Aorta (tissue), 5 donors: ENCODE measurements at regions of chr12 and their contacts with region 1.

Region 1: GRCh38 chr12:128823916-128824839 is at the start of gene SLC15A4:
- DNase-seq: peak; percentile 99
- ATAC-seq: peak; percentile 99
- H3K4me3 ChIP-seq: peak within 1 kb of the TSS; percentile 66 to 73
- H3K27ac ChIP-seq: peak within 1 kb of the TSS; percentile 44 to 81
- H3K4me1 ChIP-seq: no peaks in the 10 kb centered on the region
- H3K27me3 ChIP-seq: no peaks in the 10 kb centered on the region
- total RNA-seq, gene SLC15A4: 36.2 to 38.6 TPM

Region 2: GRCh38 chr12:128724468-128725046 is 99.6 kb before region 1 on chr12:
- intact Hi-C with region 1: no loop called
- DNase-seq: no peak
- ATAC-seq: no peak
- H3K4me3 ChIP-seq: no peak overlapping the region
- H3K27ac ChIP-seq: no peak overlapping the region
- H3K4me1 ChIP-seq: no peaks in the 10 kb centered on the region
- H3K27me3 ChIP-seq: no peaks in the 10 kb centered on the region

Region 3: GRCh38 chr12:128783129-128783574 is 41.0 kb before region 1 on chr12:
- intact Hi-C with region 1: loop called in 1 of 2 experiments (anchors 1 kb)
- DNase-seq: no peak
- ATAC-seq: no peak
- H3K4me3 ChIP-seq: no peak overlapping the region
- H3K27ac ChIP-seq: no peak overlapping the region
- H3K4me1 ChIP-seq: no peaks in the 10 kb centered on the region
- H3K27me3 ChIP-seq: no peaks in the 10 kb centered on the region

Region 4: GRCh38 chr12:128920468-128920867 is 96.3 kb after region 1 on chr12:
- intact Hi-C with region 1: loop called in 1 of 2 experiments (anchors 1 kb)
- DNase-seq: peak in 1 of 2 donors; percentile 56
- ATAC-seq: peak; percentile 92
- H3K4me3 ChIP-seq: no peak overlapping the region
- H3K27ac ChIP-seq: peak overlapping the region in 1 of 2 donors; percentile 67
- H3K4me1 ChIP-seq: peaks cover 0 to 2% of the 10 kb centered on the region in 2 donors
- H3K27me3 ChIP-seq: no peaks in the 10 kb centered on the region